Head of caudate nucleus (tissue), 42 donors: ENCODE measurements at regions of chr6 and their contacts with region 1.

Region 1: DNA sequence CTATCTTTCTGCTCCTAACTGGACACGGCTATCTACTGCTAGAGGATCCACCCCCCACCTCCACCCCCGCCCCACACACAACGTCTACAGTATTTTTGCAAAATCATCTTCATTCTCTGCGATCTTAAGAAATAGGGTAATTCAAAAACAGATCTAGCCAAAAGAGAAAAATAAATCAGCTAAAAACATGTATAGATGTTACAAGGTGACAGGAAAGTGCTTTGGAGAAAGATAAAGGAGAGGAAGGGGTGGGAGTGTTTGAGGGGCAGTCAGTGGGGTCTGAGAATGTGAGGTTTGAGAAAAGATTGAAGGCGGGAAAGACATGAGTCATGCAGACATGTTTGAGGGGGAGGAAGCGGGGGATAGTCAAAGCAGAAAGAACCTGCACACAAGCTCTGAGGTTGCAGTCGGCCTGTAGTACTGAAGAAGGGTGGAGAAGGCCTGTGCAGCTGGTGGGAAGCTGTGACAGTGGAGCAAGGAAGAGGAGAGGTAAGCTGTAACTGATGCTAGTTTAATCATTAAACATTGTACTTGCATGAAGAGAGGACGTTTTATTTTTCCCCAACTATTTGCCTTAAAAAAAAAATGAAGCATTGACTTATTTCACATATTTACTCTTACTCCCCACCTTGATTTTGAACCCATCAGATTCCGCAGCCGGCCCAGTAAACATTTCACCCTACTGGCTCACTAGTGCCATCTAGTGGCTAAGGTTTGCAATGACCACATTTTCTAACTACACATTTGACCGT is 332.6 kb downstream of the ADGRB3 start:
- DNase-seq: peak in 41 of 42 donors; percentile 10 to 88 (median 61)

Region 2: GRCh38 chr6:68559070-68559469 is 408.7 kb before region 1 on chr6:
- intact Hi-C with region 1: loop called (anchors 10 kb)
- DNase-seq: peak in 14 of 42 donors; percentile 4 to 59 (median 29)

Region 3: DNA sequence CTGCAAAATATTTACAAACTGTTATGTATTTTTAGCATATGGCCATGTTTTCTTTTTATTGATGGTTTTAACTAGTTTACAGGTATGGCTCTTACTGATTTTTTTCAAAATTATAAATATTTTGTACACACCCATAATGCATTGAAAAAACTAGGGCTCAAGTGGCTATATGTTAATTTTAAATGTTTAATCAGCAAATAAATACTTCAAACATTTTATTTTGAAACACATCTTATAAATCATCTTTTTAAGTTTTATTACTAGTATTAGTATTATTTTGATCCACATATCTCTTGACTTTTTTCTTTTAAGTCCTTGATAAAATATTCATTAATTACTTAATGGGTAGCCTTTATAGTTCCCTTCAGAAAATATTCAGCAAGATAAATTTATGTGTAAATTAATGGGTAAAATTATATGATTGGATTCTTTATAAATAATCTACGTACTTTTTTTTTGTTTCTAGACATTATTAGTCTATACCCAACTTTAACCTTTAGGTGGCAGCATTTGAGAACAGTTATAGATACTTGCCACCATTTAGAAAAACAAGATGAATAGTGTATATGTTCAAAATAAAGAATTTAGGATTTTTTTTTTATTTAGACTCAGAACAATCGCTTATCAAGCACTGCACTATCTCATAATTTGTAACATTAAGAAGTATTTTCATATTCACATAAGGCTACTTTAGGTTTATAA is 90.8 kb before region 1 on chr6:
- intact Hi-C with region 1: loop called (anchors 5 kb)
- DNase-seq: no peak